ENCODE measurements at regions of chr14 and their contacts with region 1.

Region 1: DNA sequence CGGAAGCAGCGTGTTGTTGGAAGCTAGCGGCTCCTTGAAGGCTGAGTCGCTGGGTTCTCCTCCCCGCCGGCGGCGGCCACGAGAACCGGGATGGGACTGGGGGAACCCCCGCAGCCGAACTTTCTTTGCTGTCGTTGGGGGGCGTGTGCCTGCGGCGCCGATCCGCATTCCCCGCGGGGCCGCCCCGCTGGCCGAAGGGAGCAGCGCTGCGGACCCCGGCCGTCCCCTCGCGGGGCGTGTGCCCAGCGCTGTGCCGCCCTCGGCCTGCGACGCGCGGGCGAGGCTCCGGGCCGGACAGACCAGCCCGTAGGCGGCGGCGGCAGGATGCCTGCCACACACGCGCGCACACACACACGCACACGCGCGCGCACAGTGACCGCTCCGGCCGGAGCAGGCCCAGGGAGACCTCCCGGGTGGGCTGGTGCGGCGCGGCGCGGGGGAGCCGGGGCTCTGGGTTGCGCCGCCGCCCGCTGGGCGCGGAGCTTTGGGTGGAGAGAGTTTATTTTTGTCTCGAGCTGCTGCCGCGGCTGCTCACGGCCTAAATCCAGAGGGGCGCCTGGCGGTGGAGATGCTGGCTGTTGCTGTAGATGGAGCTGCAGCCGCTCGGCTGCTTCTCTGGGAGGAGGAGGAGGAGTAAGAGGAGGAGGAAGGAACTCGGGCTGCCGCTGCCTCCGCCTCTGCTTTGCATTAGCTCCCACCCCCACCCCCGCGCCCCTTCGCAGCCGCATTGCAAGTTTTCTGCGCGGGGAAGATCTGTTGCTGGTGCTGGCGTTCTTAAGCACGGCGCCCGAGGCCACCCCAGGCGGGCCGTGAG is at the start of gene SAMD4A:
- DNase-seq: peak; percentile 32 to 68 (median 53)
- ATAC-seq: peak; percentile 46
- H3K4me3 ChIP-seq: peak within 1 kb of the TSS; percentile 74
- H3K4me3 Mint-ChIP-seq: peak within 1 kb of the TSS; percentile 91 to 97 (median 94)
- H3K27ac ChIP-seq: peak within 1 kb of the TSS; percentile 56
- H3K27ac Mint-ChIP-seq: peak within 1 kb of the TSS in 8 of 9 donors; percentile 28 to 92 (median 66)
- H3K4me1 ChIP-seq: peaks cover 9 to 11% of the 10 kb centered on the region in 2 donors
- H3K4me1 Mint-ChIP-seq: peaks cover 5 to 19% (median 14%) of the 10 kb centered on the region in 7 donors
- H3K27me3 ChIP-seq: peaks cover 0 to 12% of the 10 kb centered on the region in 2 donors
- H3K27me3 Mint-ChIP-seq: peaks cover 0 to 51% (median 6%) of the 10 kb centered on the region in 5 donors
- total RNA-seq, gene SAMD4A: 0.73 to 5.7 (median 1.7) TPM

Region 2: DNA sequence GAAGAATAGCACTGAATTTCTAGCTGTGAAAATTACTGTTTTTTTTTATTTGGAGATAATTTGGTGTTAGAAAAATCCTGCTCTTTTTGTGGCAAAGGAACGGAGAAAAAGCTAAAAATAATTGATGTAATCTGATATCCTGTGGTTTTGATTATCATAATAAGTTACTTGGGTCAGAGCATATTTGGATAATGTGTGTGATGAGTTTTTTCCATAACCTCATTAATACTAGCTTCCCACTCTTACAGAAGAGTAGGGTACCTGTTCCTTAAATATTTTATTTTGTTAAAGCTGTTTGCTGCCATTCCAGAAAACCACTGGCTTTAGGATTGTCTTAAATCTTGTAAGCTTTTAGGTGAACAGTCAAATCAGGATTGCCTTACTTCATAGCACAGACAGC is 1855.0 kb before region 1 on chr14:
- CTCF ChIA-PET with region 1: no interaction called
- POLR2A ChIA-PET with region 1: no interaction called
- intact Hi-C with region 1: no loop called
- DNase-seq: no peak
- ATAC-seq: no peak
- H3K4me3 ChIP-seq: no peak overlapping the region
- H3K4me3 Mint-ChIP-seq: no peak overlapping the region
- H3K27ac ChIP-seq: no peak overlapping the region
- H3K27ac Mint-ChIP-seq: peak overlapping the region in 1 of 9 donors; percentile 9
- H3K4me1 ChIP-seq: peaks cover 7 to 9% of the 10 kb centered on the region in 2 donors
- H3K4me1 Mint-ChIP-seq: peaks cover 22 to 50% (median 45%) of the 10 kb centered on the region in 7 donors
- H3K27me3 ChIP-seq: no peaks in the 10 kb centered on the region
- H3K27me3 Mint-ChIP-seq: no peaks in the 10 kb centered on the region

Region 3: GRCh38 chr14:54366736-54367735 is 199.6 kb before region 1 on chr14:
- CTCF ChIA-PET with region 1: no interaction called
- POLR2A ChIA-PET with region 1: no interaction called
- intact Hi-C with region 1: loop called in 1 of 2 experiments (anchors 1 kb)
- DNase-seq: peak in 6 of 9 donors; percentile 13 to 46 (median 28)
- ATAC-seq: peak; percentile 83
- H3K4me3 ChIP-seq: no peak overlapping the region
- H3K4me3 Mint-ChIP-seq: no peak overlapping the region
- H3K27ac ChIP-seq: no peak overlapping the region
- H3K27ac Mint-ChIP-seq: no peak overlapping the region
- H3K4me1 ChIP-seq: no peaks in the 10 kb centered on the region
- H3K4me1 Mint-ChIP-seq: peaks cover 0 to 1% (median 0%) of the 10 kb centered on the region in 7 donors
- H3K27me3 ChIP-seq: no peaks in the 10 kb centered on the region
- H3K27me3 Mint-ChIP-seq: peaks cover 0 to 29% (median 15%) of the 10 kb centered on the region in 5 donors

Region 4: GRCh38 chr14:54488646-54489317 is 77.8 kb before region 1 on chr14 and contains the start of gene GMFB:
- CTCF ChIA-PET with region 1: no interaction called
- POLR2A ChIA-PET with region 1: interaction called, 4 read pairs
- intact Hi-C with region 1: loop called (anchors 1 to 2 kb)
- DNase-seq: peak; percentile 72 to 88 (median 84)
- ATAC-seq: peak; percentile 97
- H3K4me3 ChIP-seq: peak within 1 kb of the TSS; percentile 65
- H3K4me3 Mint-ChIP-seq: peak within 1 kb of the TSS; percentile 80 to 96 (median 92)
- H3K27ac ChIP-seq: peak within 1 kb of the TSS; percentile 86
- H3K27ac Mint-ChIP-seq: peak within 1 kb of the TSS; percentile 77 to 99 (median 97)
- H3K4me1 ChIP-seq: peaks cover 17 to 18% of the 10 kb centered on the region in 2 donors
- H3K4me1 Mint-ChIP-seq: peaks cover 42 to 69% (median 63%) of the 10 kb centered on the region in 7 donors
- H3K27me3 ChIP-seq: no peaks in the 10 kb centered on the region
- H3K27me3 Mint-ChIP-seq: peaks cover 0 to 3% (median 0%) of the 10 kb centered on the region in 5 donors
- total RNA-seq, gene GMFB: 28.9 to 39.9 (median 34.7) TPM

Region 5: GRCh38 chr14:54642801-54643697 is 76.4 kb after region 1 on chr14:
- CTCF ChIA-PET with region 1: interaction called, 12 read pairs
- POLR2A ChIA-PET with region 1: no interaction called
- intact Hi-C with region 1: loop called (anchors 1 kb)
- DNase-seq: peak in 4 of 9 donors; percentile 18 to 29 (median 22)
- ATAC-seq: peak; percentile 42
- H3K4me3 ChIP-seq: no peak overlapping the region
- H3K4me3 Mint-ChIP-seq: no peak overlapping the region
- H3K27ac ChIP-seq: no peak overlapping the region
- H3K27ac Mint-ChIP-seq: no peak overlapping the region
- H3K4me1 ChIP-seq: no peaks in the 10 kb centered on the region
- H3K4me1 Mint-ChIP-seq: peaks cover 0 to 4% (median 0%) of the 10 kb centered on the region in 7 donors
- H3K27me3 ChIP-seq: no peaks in the 10 kb centered on the region
- H3K27me3 Mint-ChIP-seq: peaks cover 0 to 5% (median 3%) of the 10 kb centered on the region in 5 donors

Region 6: GRCh38 chr14:54773171-54773975 is 206.8 kb after region 1 on chr14:
- CTCF ChIA-PET with region 1: interaction called, 113 read pairs
- POLR2A ChIA-PET with region 1: interaction called, 12 read pairs
- intact Hi-C with region 1: loop called (anchors 1 kb)
- DNase-seq: peak; percentile 21 to 83 (median 58)
- ATAC-seq: peak; percentile 78
- H3K4me3 ChIP-seq: peak overlapping the region; percentile 14
- H3K4me3 Mint-ChIP-seq: peak overlapping the region in 9 of 10 donors; percentile 15 to 80 (median 71)
- H3K27ac ChIP-seq: peak overlapping the region; percentile 14
- H3K27ac Mint-ChIP-seq: peak overlapping the region; percentile 24 to 88 (median 77)
- H3K4me1 ChIP-seq: peaks cover 4 to 27% of the 10 kb centered on the region in 2 donors
- H3K4me1 Mint-ChIP-seq: peaks cover 19 to 42% (median 23%) of the 10 kb centered on the region in 7 donors
- H3K27me3 ChIP-seq: no peaks in the 10 kb centered on the region
- H3K27me3 Mint-ChIP-seq: peaks cover 0 to 31% (median 10%) of the 10 kb centered on the region in 5 donors

Region 7: DNA sequence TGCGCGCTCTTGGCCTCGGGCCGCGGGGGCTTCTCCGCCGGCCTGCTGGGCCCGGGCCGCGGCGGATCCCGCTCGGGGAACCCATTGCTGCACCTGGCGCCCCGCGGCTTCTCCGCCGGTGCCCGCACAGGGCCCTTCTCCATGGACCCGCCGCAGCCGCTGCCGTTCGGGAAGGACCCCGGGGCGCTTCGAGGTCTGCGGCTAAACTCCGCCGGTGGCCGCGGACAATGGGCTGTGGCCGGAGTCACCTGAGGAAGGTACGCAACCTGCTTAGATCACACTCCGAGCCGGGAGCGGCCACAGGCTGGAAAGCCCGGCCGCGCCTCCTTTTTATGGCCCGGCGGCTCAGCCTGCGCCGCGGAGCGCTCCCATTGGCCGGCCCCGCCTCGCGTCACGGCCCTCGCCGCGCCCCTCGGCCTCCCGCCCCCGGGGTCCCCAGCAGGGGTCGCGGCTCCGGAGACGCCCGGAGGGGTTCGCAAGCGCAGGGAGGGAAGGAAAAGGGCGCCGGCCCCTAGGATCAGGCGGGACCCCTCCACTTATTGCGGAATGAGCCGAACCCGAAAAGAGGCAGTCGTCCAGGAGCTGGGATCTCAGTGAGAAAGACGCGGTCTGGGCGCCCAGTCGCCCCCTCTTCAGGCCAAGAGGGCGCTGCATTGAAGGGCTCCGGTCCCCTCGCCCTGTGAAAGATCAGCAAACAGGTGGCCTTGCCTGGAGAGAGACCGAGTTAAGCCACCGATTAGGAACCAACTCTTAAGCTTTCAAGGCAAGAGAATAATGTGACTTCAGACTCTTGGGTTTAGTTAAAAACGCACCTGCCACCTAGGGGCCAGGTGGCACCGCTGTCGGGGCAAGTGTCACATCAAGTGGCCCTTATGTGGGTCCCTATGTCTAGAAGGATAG is 336.2 kb after region 1 on chr14 and contains the start of gene GCH1:
- CTCF ChIA-PET with region 1: no interaction called
- POLR2A ChIA-PET with region 1: no interaction called
- intact Hi-C with region 1: loop called (anchors 1 to 2 kb)
- DNase-seq: peak; percentile 63 to 85 (median 71)
- ATAC-seq: peak; percentile 88
- H3K4me3 ChIP-seq: peak within 1 kb of the TSS; percentile 99
- H3K4me3 Mint-ChIP-seq: peak within 1 kb of the TSS; percentile 82 to 94 (median 90)
- H3K27ac ChIP-seq: peak within 1 kb of the TSS; percentile 88
- H3K27ac Mint-ChIP-seq: peak within 1 kb of the TSS; percentile 66 to 95 (median 91)
- H3K4me1 ChIP-seq: peaks cover under 1 to 9% of the 10 kb centered on the region in 2 donors
- H3K4me1 Mint-ChIP-seq: peaks cover 15 to 43% (median 31%) of the 10 kb centered on the region in 7 donors
- H3K27me3 ChIP-seq: no peaks in the 10 kb centered on the region
- H3K27me3 Mint-ChIP-seq: no peaks in the 10 kb centered on the region
- total RNA-seq, gene GCH1: 21.4 to 64.1 (median 23.2) TPM

Region 8: DNA sequence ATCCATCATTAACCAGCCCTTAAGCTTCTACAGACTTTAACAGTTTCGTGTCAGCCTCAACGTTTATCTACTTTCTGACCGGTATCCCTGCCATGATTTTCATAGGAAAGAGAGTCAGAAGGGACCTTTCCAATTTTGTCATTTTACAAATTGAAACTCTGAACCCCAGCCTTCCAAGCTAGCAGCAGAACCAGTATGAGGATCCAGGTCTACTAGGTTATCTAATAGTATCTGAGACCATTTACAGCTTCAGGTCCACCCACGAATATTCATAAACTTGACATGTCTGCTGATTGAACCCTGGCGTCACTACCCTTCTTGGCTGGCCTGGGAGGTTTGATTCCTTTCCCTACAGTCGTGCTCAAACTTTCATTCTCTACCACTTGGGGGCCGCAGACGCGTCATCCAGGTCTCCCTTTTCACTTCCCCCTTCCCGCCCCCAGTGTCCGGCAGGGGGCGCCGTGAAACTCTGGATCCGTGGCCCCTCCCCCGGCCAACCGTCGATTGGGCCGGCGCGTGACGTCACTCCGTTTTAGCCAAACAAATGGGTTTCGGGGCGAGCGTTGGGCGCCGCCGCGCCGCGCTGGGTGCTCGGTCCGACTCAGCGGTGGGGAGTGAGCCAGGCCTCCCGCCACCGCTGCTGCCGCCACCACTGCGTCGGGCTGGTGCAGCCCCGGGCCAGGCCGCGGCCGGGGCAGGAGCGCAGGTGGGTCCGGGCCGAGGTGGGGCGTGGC is 704.4 kb after region 1 on chr14 and contains the start of gene FBXO34:
- CTCF ChIA-PET with region 1: no interaction called
- POLR2A ChIA-PET with region 1: no interaction called
- intact Hi-C with region 1: loop called in 1 of 2 experiments (anchors 1 kb)
- DNase-seq: peak; percentile 96 to 100 (median 99)
- ATAC-seq: peak; percentile 96
- H3K4me3 ChIP-seq: peak within 1 kb of the TSS; percentile 64
- H3K4me3 Mint-ChIP-seq: peak within 1 kb of the TSS; percentile 85 to 94 (median 92)
- H3K27ac ChIP-seq: peak within 1 kb of the TSS; percentile 88
- H3K27ac Mint-ChIP-seq: peak within 1 kb of the TSS; percentile 85 to 96 (median 94)
- H3K4me1 ChIP-seq: peaks cover 4 to 19% of the 10 kb centered on the region in 2 donors
- H3K4me1 Mint-ChIP-seq: peaks cover 19 to 48% (median 40%) of the 10 kb centered on the region in 7 donors
- H3K27me3 ChIP-seq: no peaks in the 10 kb centered on the region
- H3K27me3 Mint-ChIP-seq: peaks cover 0 to 3% (median 0%) of the 10 kb centered on the region in 5 donors
- total RNA-seq, gene FBXO34: 22.0 to 27.3 (median 25.8) TPM

Measured in naive thymus-derived CD4-positive, alpha-beta T cell (primary cell).